Panc1 (cell line): ENCODE measurements at regions of chr1 and their contacts with region 1.

Region 1: GRCh38 chr1:91404151-91405012 is at the start of gene HFM1:
- DNase-seq: no peak
- ATAC-seq: peak; percentile 100
- H3K4me3 ChIP-seq: peak within 1 kb of the TSS; percentile 66 to 73
- H3K27ac ChIP-seq: peak within 1 kb of the TSS; percentile 49; the same call in 1 of the 2 replicates
- H3K4me1 ChIP-seq: peaks cover 3% of the 10 kb centered on the region; the same call in 1 of the 2 replicates
- H3K27me3 ChIP-seq: peaks cover 17% of the 10 kb centered on the region
- CTCF ChIP-seq: peak; percentile 46
- total RNA-seq, gene HFM1: 0.39 TPM

Region 2: DNA sequence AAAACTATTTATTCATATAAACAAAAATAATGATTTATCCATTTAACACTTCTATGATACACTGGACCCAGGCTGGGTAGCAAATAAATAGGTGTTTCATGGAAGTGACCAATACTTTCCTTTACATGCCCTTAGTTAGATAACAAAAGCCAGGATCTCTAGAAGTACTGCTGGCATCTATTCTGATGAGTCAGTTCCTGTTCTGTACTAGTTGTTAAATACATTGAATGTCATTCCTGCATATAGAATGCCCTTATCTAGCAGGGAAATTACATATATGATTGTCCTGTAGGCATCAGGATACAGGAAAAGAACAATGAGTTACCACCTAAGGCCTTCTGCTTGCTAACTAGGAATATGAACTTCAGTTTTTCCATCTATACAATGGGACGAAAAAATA is 130.5 kb before region 1 on chr1:
- CTCF ChIA-PET with region 1: interaction called, 11 read pairs
- POLR2A ChIA-PET with region 1: no interaction called
- in situ Hi-C with region 1: no loop called
- intact Hi-C with region 1: no loop called
- DNase-seq: no peak
- ATAC-seq: no peak
- H3K4me3 ChIP-seq: no peak overlapping the region
- H3K27ac ChIP-seq: no peak overlapping the region
- H3K4me1 ChIP-seq: no peaks in the 10 kb centered on the region
- H3K27me3 ChIP-seq: peaks cover 6% of the 10 kb centered on the region; the same call in 1 of the 2 replicates
- CTCF ChIP-seq: no peak

Region 3: GRCh38 chr1:91500756-91501522 is 96.6 kb after region 1 on chr1 and contains the start of gene CDC7:
- CTCF ChIA-PET with region 1: interaction called, 7 read pairs
- POLR2A ChIA-PET with region 1: interaction called, 3 read pairs
- in situ Hi-C with region 1: no loop called
- intact Hi-C with region 1: loop called (anchors 5 kb)
- DNase-seq: peak; percentile 93
- ATAC-seq: peak; percentile 94
- H3K4me3 ChIP-seq: peak within 1 kb of the TSS; percentile 66 to 78
- H3K27ac ChIP-seq: peak within 1 kb of the TSS; percentile 96
- H3K4me1 ChIP-seq: peaks cover 18% of the 10 kb centered on the region
- H3K27me3 ChIP-seq: no peaks in the 10 kb centered on the region
- CTCF ChIP-seq: peak; percentile 73
- total RNA-seq, gene CDC7: 30.1 TPM

Region 4: GRCh38 chr1:92544756-92545165 is 1140.4 kb after region 1 on chr1:
- CTCF ChIA-PET with region 1: no interaction called
- POLR2A ChIA-PET with region 1: no interaction called
- in situ Hi-C with region 1: no loop called
- intact Hi-C with region 1: no loop called
- DNase-seq: no peak
- ATAC-seq: no peak
- H3K4me3 ChIP-seq: no peak overlapping the region
- H3K27ac ChIP-seq: no peak overlapping the region
- H3K4me1 ChIP-seq: no peaks in the 10 kb centered on the region
- H3K27me3 ChIP-seq: no peaks in the 10 kb centered on the region
- CTCF ChIP-seq: no peak